Right ventricle myocardium inferior (tissue), 1 donor: ENCODE measurements at regions of chr11 and their contacts with region 1.

Region 1: DNA sequence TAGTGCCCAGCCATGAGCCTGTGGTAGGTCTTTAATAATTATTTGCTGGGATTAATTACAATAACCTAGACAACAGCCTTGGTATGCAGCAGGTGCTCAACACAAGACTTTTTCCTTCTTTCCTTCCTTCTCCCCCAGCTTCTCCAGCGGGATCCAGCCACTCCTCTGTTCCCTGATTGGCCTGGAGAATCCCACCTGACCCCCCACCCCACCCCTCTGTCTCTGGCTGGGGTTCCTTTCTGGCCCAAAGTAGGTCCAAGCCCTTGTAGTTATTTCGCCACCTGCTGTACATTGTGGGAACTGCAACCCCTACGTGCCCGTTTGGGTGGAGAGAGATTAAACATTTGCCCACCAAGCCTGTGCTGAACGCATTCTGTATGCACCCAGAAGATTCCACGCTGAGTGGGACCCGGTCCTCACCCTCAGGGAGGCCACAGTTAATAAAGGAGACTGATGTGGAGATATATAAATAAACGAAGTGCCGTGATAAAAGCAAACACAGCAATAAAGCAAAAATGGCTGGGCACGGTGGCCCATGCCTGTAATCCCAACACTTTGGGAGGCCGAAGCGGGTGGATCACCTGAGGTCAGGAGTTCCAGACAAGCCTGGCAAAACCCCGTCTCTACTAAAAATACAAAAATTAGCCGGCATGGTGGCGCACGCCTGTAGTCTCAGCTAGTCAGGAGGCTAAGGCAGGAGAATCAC is 32.1 kb upstream of the DGKZ start:
- DNase-seq: no peak
- ATAC-seq: peak; percentile 39

Region 2: GRCh38 chr11:46149342-46149741 is 165.8 kb before region 1 on chr11:
- intact Hi-C with region 1: no loop called
- DNase-seq: no peak
- ATAC-seq: no peak

Region 3: DNA sequence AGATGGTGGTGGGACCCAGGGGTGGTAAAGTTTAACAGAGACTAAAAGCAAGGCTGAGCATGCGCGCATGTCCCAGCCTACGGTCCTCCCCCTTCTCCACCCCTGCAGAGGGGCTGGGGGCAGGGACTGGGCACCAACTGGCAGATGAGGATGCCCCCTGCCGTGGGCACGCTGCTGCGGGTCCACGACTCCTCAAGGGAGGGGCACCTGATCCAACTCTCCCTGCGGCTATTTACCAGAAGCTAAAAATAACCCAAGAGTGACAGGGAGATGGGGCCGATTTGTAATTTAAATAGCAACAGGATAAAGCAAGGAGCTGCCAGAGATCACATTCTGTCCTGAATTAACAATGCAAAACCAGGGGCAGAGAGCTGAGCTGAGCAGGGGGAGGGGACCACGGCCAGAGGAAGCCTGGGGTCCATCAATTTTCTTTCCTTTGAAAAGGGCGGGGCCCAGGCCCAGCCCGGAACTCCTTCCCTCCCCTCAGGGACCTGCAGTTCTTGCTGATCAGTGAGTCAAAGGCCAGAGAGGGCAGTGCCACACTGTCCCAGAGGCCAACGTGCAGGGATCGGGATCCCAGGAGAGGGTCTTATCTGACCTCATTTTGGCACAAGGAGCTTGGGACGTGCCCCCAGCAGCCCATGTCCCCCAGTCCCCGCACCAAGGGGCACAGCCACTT is 23.9 kb after region 1 on chr11:
- intact Hi-C with region 1: loop called (anchors 2 kb)
- DNase-seq: peak; percentile 86
- ATAC-seq: peak; percentile 82

Region 4: GRCh38 chr11:47276923-47277322 is 961.7 kb after region 1 on chr11:
- intact Hi-C with region 1: no loop called
- DNase-seq: no peak
- ATAC-seq: no peak